GM12878 (cell line): ENCODE measurements at regions of chr2 and their contacts with region 1.

Region 1: GRCh38 chr2:168495524-168495923 is 39.5 kb downstream of the CERS6 start:
- DNase-seq: peak; percentile 86
- ATAC-seq: peak; percentile 85
- H3K4me3 ChIP-seq: peak overlapping the region; percentile 49; the same call in 1 of the 2 replicates
- H3K27ac ChIP-seq: peak overlapping the region; percentile 79
- H3K4me1 ChIP-seq: peaks cover 34% of the 10 kb centered on the region
- H3K27me3 ChIP-seq: no peaks in the 10 kb centered on the region
- CTCF ChIP-seq: no peak
- EP300 ChIP-seq: peak; percentile 72 to 96
- POLR2A ChIP-seq: no peak
- RAD21 ChIP-seq: peak; percentile 20; the same call in 1 of the 2 replicates

Region 2: GRCh38 chr2:168530982-168531622 is 35.6 kb after region 1 on chr2:
- CTCF ChIA-PET with region 1: no interaction called
- POLR2A ChIA-PET with region 1: no interaction called
- RAD21 ChIA-PET with region 1: no interaction called
- SMC1A ChIA-PET with region 1: interaction called, 6 read pairs
- in situ Hi-C with region 1: no loop called
- intact Hi-C with region 1: loop called (anchors 5 kb)
- DNase-seq: no peak
- ATAC-seq: peak; percentile 69
- H3K4me3 ChIP-seq: peak overlapping the region; percentile 46; the same call in 1 of the 2 replicates
- H3K27ac ChIP-seq: peak overlapping the region; percentile 61
- H3K4me1 ChIP-seq: peaks cover 28% of the 10 kb centered on the region
- H3K27me3 ChIP-seq: no peaks in the 10 kb centered on the region
- CTCF ChIP-seq: no peak
- EP300 ChIP-seq: no peak
- POLR2A ChIP-seq: no peak
- RAD21 ChIP-seq: no peak